ENCODE measurements at regions of chr5 and their contacts with region 1.

Region 1: DNA sequence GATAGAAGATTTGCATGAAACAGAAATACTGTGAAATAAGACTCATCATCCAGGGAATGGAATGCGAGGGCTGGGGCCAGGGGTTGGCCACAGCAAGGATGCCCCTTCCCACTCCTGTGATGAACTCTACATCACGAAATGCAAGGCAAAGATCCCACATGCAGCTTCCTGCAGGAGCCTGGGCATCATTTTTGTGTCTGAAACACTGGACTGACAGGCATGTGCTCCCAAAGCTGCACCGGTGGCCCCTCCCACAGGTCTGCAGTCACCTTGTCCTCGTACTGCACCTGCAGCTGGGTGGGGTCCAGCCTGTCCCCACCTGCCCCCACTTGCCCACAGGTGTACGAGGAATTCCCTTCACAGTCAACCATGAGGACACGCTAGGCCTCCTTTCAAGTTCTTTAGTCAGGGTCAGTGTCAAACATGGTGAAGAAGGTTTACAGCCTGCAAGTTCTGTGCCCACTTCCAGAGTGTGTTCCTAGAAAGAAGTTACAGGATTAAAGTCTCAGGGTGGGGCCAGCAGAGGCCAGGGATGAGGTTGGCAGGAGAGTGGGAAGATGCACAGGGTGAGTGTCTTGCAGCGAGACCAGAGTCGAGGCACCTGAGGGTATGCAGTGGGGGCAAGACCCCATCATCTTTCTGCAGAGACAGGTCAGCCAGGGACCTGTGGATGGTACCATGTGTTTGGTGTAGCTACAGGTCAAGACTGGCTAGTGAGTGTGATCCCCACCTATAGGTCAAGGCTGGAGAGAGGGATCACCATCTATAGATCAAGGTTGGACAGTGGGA is 155.0 kb upstream of the IRX2 start:
- DNase-seq: no peak
- ATAC-seq: no peak
- H3K4me3 ChIP-seq: no peak overlapping the region
- H3K27ac ChIP-seq: no peak overlapping the region
- H3K4me1 ChIP-seq: no peaks in the 10 kb centered on the region
- H3K27me3 ChIP-seq: no peaks in the 10 kb centered on the region
- CTCF ChIP-seq: no peak
- POLR2A ChIP-seq: no peak
- RAD21 ChIP-seq: no peak

Region 2: DNA sequence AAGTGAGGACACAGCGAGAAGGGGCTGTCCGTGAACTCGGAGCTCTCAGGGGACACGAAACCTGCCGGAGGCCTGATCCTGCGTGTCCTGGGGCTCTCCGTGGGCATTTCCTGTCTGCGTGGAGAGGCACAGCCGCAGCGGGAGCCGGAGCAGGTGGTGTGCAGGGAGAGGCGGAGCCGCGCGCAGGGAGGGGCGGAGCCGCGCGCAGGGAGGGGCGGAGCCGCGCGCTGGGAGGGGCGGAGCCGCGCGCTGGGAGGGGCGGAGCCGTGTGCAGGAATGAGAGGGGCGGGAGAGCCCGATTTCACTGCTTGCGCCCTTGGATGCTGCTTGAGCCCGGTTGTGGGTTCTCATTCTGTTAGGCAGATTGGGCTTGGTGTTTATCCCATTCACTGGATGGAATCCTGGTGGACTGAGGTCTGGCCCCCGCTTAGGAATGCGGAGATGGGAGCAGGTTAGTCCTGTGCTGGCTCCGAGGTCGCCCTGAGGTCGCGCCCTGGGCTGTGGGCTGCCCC is 1078.6 kb before region 1 on chr5:
- CTCF ChIA-PET with region 1: no interaction called
- POLR2A ChIA-PET with region 1: no interaction called
- dilution Hi-C with region 1: no loop called
- in situ Hi-C with region 1: no loop called
- intact Hi-C with region 1: no loop called
- DNase-seq: no peak
- ATAC-seq: no peak
- H3K4me3 ChIP-seq: no peak overlapping the region
- H3K27ac ChIP-seq: no peak overlapping the region
- H3K4me1 ChIP-seq: no peaks in the 10 kb centered on the region; the same call in 1 of the 2 replicates
- H3K27me3 ChIP-seq: no peaks in the 10 kb centered on the region; the same call in 1 of the 2 replicates
- CTCF ChIP-seq: no peak
- POLR2A ChIP-seq: no peak
- RAD21 ChIP-seq: no peak

Region 3: GRCh38 chr5:2948875-2949274 is 42.4 kb after region 1 on chr5:
- CTCF ChIA-PET with region 1: no interaction called
- POLR2A ChIA-PET with region 1: interaction called, 12 read pairs
- dilution Hi-C with region 1: no loop called
- in situ Hi-C with region 1: no loop called
- intact Hi-C with region 1: no loop called
- DNase-seq: no peak
- ATAC-seq: no peak
- H3K4me3 ChIP-seq: no peak overlapping the region
- H3K27ac ChIP-seq: no peak overlapping the region
- H3K4me1 ChIP-seq: no peaks in the 10 kb centered on the region
- H3K27me3 ChIP-seq: no peaks in the 10 kb centered on the region
- CTCF ChIP-seq: no peak
- POLR2A ChIP-seq: no peak
- RAD21 ChIP-seq: no peak

Region 4: GRCh38 chr5:3303777-3304176 is 397.3 kb after region 1 on chr5:
- CTCF ChIA-PET with region 1: no interaction called
- POLR2A ChIA-PET with region 1: no interaction called
- dilution Hi-C with region 1: no loop called
- in situ Hi-C with region 1: no loop called
- intact Hi-C with region 1: loop called (anchors 5 kb)
- DNase-seq: no peak
- ATAC-seq: no peak
- H3K4me3 ChIP-seq: no peak overlapping the region
- H3K27ac ChIP-seq: no peak overlapping the region
- H3K4me1 ChIP-seq: no peaks in the 10 kb centered on the region
- H3K27me3 ChIP-seq: no peaks in the 10 kb centered on the region
- CTCF ChIP-seq: no peak
- POLR2A ChIP-seq: no peak
- RAD21 ChIP-seq: no peak

Measured in IMR-90 (cell line).